ENCODE measurements at regions of chr12 and their contacts with region 1.

Region 1: GRCh38 chr12:124767066-124767821 is 96.4 kb downstream of the SCARB1 start:
- DNase-seq: peak; percentile 58
- H3K4me3 ChIP-seq: no peak overlapping the region
- H3K27ac ChIP-seq: no peak overlapping the region
- H3K4me1 ChIP-seq: no peaks in the 10 kb centered on the region
- H3K27me3 ChIP-seq: no peaks in the 10 kb centered on the region
- CTCF ChIP-seq: peak; percentile 95 to 96
- POLR2A ChIP-seq: no peak

Region 2: GRCh38 chr12:123905319-123905925 is 861.8 kb before region 1 on chr12:
- CTCF ChIA-PET with region 1: interaction called, 7 read pairs
- POLR2A ChIA-PET with region 1: no interaction called
- dilution Hi-C with region 1: no loop called
- intact Hi-C with region 1: loop called (anchors 5 kb)
- DNase-seq: peak; percentile 73
- H3K4me3 ChIP-seq: no peak overlapping the region
- H3K27ac ChIP-seq: no peak overlapping the region
- H3K4me1 ChIP-seq: no peaks in the 10 kb centered on the region
- H3K27me3 ChIP-seq: peaks cover 3 to 8% of the 10 kb centered on the region in 2 experiments
- CTCF ChIP-seq: peak; percentile 66 to 73
- POLR2A ChIP-seq: no peak

Region 3: DNA sequence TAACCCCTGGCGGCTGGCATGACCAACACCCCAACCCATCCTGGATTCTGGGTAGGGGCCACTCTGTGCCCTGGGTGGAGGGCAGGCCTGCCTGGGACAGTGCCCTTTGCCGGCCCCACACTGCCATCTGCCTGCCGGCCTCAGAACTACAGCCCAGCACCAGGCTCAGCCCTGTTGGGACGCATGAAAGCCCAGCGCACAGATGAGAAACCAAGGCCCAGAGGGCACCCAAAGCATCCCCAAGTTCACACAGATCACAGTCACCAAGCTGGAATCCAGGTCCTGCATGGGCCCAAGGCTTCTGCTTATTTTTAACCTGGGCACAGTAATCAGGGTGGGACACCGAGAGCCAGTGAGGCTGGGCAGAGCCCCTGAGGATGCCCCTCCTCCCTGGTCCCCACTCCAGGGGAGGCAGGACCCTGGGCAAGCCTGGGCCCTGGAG is 446.2 kb before region 1 on chr12:
- CTCF ChIA-PET with region 1: no interaction called
- POLR2A ChIA-PET with region 1: no interaction called
- dilution Hi-C with region 1: no loop called
- intact Hi-C with region 1: loop called (anchors 10 kb)
- DNase-seq: peak; percentile 59
- H3K4me3 ChIP-seq: no peak overlapping the region
- H3K27ac ChIP-seq: no peak overlapping the region
- H3K4me1 ChIP-seq: no peaks in the 10 kb centered on the region
- H3K27me3 ChIP-seq: no peaks in the 10 kb centered on the region
- CTCF ChIP-seq: peak; percentile 94 to 98
- POLR2A ChIP-seq: peak; percentile 36

Region 4: DNA sequence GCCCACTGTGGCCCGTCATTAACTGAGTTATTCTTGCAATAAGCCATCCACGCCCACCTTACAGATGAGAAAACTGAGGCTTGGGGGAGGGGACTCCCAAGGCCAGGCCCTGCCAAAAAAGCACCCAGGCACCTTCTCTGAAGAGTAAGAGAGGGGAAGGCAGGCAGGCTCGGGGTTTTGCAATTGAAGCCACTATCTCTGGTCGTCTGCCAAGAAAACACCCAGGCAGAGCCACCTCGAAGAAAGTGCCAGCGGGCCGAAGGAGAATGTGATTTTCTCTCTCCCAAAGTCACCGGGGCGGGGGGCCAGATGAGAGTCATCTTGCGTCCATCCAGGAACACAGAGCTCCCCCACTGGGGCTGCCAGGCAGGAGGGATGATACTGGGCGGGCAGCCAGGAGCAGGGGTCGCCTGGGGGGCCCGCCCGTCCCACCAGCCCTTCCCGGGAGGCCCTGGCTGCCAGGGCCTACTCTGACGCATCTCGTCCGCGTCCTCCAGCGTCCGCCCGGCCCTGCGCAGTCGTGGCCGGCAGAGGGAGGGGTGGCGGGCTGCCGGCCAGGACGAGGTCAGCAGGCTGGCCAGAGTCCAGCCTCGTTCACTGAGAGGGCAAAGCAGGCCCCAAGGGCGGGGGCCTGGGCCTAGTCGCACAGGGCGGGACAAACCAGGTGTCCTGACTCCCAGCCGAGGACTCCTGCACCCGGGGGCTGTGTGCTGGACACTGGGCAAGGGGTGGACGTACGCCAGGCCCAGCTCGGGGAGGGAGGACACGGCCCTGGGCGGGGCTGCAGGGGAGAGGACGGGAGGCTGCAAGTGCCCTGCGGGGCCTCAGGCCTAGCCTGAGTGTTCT is 398.0 kb before region 1 on chr12:
- CTCF ChIA-PET with region 1: no interaction called
- POLR2A ChIA-PET with region 1: no interaction called
- dilution Hi-C with region 1: no loop called
- intact Hi-C with region 1: loop called (anchors 5 kb)
- DNase-seq: peak; percentile 90
- H3K4me3 ChIP-seq: no peak overlapping the region
- H3K27ac ChIP-seq: peak overlapping the region; percentile 61
- H3K4me1 ChIP-seq: peaks cover 29% of the 10 kb centered on the region
- H3K27me3 ChIP-seq: no peaks in the 10 kb centered on the region
- CTCF ChIP-seq: peak; percentile 31 to 60
- POLR2A ChIP-seq: no peak

Region 5: GRCh38 chr12:124453419-124454351 is 313.6 kb before region 1 on chr12:
- CTCF ChIA-PET with region 1: interaction called, 3 read pairs
- POLR2A ChIA-PET with region 1: no interaction called
- dilution Hi-C with region 1: no loop called
- intact Hi-C with region 1: loop called (anchors 5 kb)
- DNase-seq: peak; percentile 80
- H3K4me3 ChIP-seq: no peak overlapping the region
- H3K27ac ChIP-seq: peak overlapping the region; percentile 81
- H3K4me1 ChIP-seq: peaks cover 29% of the 10 kb centered on the region
- H3K27me3 ChIP-seq: no peaks in the 10 kb centered on the region
- CTCF ChIP-seq: no peak
- POLR2A ChIP-seq: no peak

Region 6: GRCh38 chr12:124625867-124626675 is 141.2 kb before region 1 on chr12:
- CTCF ChIA-PET with region 1: interaction called, 4 read pairs
- POLR2A ChIA-PET with region 1: no interaction called
- dilution Hi-C with region 1: no loop called
- intact Hi-C with region 1: loop called (anchors 2 kb)
- DNase-seq: peak; percentile 91
- H3K4me3 ChIP-seq: no peak overlapping the region
- H3K27ac ChIP-seq: peak overlapping the region; percentile 91
- H3K4me1 ChIP-seq: peaks cover 26% of the 10 kb centered on the region
- H3K27me3 ChIP-seq: no peaks in the 10 kb centered on the region
- CTCF ChIP-seq: no peak
- POLR2A ChIP-seq: peak; percentile 51

Region 7: GRCh38 chr12:124645530-124646244 is 121.6 kb before region 1 on chr12:
- CTCF ChIA-PET with region 1: no interaction called
- POLR2A ChIA-PET with region 1: no interaction called
- dilution Hi-C with region 1: no loop called
- intact Hi-C with region 1: no loop called
- DNase-seq: no peak
- H3K4me3 ChIP-seq: no peak overlapping the region
- H3K27ac ChIP-seq: no peak overlapping the region
- H3K4me1 ChIP-seq: no peaks in the 10 kb centered on the region
- H3K27me3 ChIP-seq: no peaks in the 10 kb centered on the region
- CTCF ChIP-seq: no peak
- POLR2A ChIP-seq: no peak

Region 8: DNA sequence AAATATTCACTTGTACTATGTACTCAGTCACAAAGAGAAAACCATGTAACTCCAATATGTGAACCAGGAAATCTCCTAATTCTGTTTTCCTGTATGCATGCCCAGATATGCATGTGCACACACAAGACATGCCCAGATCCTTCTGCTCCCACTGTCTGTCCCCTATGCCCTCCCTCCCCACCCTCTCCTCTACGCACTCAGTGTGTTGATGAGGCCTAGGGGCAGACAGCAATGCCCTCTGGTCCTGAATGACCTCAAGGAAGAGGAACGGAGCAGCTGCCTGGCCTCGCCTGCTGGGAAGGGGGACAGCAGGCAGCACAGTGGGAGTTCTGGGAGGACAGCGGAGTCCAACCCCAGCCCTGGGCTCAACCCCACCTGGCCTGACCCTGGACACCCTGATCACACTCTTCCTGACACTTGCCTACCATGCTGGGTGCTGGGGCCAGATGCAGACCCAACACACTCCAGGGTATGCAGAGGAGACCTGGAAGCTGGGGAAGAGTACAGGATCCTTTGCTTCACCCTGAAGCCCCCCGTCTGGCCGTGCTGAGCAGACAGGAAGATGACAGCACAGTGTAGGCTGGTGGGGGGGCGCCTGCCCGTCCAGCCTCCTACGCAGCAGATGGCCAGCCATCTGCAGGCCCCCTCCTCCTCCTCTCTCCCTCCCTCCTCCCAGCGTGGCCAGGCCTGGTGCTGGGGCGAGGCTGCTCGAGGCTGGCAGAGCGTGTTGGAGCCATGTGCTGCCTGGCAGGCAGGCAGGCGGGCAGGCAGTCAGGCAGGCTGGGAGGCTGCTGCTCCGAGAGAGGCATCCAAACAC is 93.2 kb before region 1 on chr12:
- CTCF ChIA-PET with region 1: no interaction called
- POLR2A ChIA-PET with region 1: no interaction called
- dilution Hi-C with region 1: no loop called
- intact Hi-C with region 1: no loop called
- DNase-seq: no peak
- H3K4me3 ChIP-seq: no peak overlapping the region
- H3K27ac ChIP-seq: no peak overlapping the region
- H3K4me1 ChIP-seq: peaks cover 6% of the 10 kb centered on the region
- H3K27me3 ChIP-seq: no peaks in the 10 kb centered on the region
- CTCF ChIP-seq: no peak
- POLR2A ChIP-seq: no peak

Region 9: DNA sequence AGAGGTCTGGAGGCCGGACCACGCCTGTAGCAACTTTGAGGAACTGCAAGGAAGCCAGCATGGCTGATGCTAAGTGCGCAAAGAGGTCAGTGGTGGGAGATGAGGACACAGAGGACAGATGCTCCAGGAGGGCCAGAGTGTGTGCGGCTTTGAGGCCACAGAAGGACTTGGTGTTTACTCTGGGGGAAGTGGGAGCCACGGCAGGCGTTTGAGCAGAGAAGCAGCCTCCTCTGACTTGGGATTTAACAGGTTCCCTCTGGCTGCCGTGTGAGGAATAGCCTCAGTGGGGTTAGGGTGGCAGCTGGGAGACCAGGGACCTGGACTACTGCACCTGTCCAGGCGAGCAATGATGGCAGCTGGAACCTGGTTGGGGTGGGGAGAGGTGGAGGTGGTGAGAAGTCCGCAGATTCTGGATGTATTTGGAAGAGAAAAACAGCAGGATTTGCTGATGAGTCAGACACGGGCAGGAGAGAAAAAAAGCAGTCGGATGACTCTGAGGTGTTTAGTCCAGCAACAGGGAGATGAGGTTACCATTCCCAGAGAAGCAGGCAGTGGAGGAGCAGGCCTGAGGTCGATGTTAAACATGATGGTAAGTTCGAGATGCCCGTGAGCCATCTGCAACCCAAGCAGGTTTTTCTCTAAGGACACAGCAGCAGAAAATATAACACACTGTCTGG is 47.1 kb before region 1 on chr12:
- CTCF ChIA-PET with region 1: interaction called, 6 read pairs
- POLR2A ChIA-PET with region 1: no interaction called
- dilution Hi-C with region 1: no loop called
- intact Hi-C with region 1: loop called (anchors 1 kb)
- DNase-seq: peak; percentile 72
- H3K4me3 ChIP-seq: no peak overlapping the region
- H3K27ac ChIP-seq: peak overlapping the region; percentile 80
- H3K4me1 ChIP-seq: peaks cover 27% of the 10 kb centered on the region
- H3K27me3 ChIP-seq: no peaks in the 10 kb centered on the region
- CTCF ChIP-seq: peak; percentile 20 to 38
- POLR2A ChIP-seq: no peak

Measured in endothelial cell of umbilical vein (primary cell).